ENCODE measurements at regions of chrX and their contacts with region 1.

Region 1: GRCh38 chrX:39730662-39731397 is 366.9 kb downstream of the BCOR start:
- DNase-seq: peak; percentile 92

Region 2: DNA sequence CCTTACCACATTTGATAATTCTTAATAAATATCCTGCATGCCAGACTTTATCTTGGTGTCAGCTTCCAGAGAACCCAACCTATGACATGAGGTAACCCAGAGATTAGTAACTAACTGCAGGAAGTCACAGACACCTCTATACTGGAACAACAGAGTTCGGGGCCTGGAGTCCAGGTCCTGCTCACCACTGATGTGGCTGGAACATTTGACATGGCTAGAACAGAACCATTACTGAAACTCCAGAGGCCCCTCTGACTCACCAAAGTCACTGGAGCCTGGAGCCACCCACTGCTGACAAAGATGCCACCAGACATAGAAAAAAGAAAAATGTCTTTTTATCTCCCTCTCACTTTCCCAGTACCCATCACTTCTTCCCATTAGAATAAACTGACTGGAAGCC is 525.9 kb before region 1 on chrX:
- intact Hi-C with region 1: no loop called
- DNase-seq: no peak

Region 3: GRCh38 chrX:40013266-40014195 is 282.7 kb after region 1 on chrX:
- intact Hi-C with region 1: loop called in 1 of 2 experiments (anchors 10 kb)
- DNase-seq: peak; percentile 92

Region 4: GRCh38 chrX:40083120-40083978 is 352.5 kb after region 1 on chrX:
- intact Hi-C with region 1: loop called in 1 of 2 experiments (anchors 10 kb)
- DNase-seq: no peak